HCT116 (cell line): ENCODE measurements at regions of chr15 and their contacts with region 1.

Region 1: GRCh38 chr15:62209322-62209721 is 44.2 kb upstream of the C2CD4B start:
- DNase-seq: no peak
- ATAC-seq: no peak
- H3K4me3 ChIP-seq: no peak overlapping the region
- H3K27ac ChIP-seq: no peak overlapping the region
- H3K4me1 ChIP-seq: no peaks in the 10 kb centered on the region
- H3K27me3 ChIP-seq: no peaks in the 10 kb centered on the region; the same call in 1 of the 2 replicates
- CTCF ChIP-seq: no peak
- POLR2A ChIP-seq: no peak
- RAD21 ChIP-seq: no peak

Region 2: GRCh38 chr15:61489571-61489970 is 719.8 kb before region 1 on chr15:
- CTCF ChIA-PET with region 1: no interaction called
- POLR2A ChIA-PET with region 1: no interaction called
- RAD21 ChIA-PET with region 1: no interaction called
- intact Hi-C with region 1: no loop called
- DNase-seq: no peak
- ATAC-seq: no peak
- H3K4me3 ChIP-seq: no peak overlapping the region
- H3K27ac ChIP-seq: no peak overlapping the region
- H3K4me1 ChIP-seq: no peaks in the 10 kb centered on the region
- H3K27me3 ChIP-seq: no peaks in the 10 kb centered on the region
- CTCF ChIP-seq: no peak
- POLR2A ChIP-seq: no peak
- RAD21 ChIP-seq: no peak

Region 3: DNA sequence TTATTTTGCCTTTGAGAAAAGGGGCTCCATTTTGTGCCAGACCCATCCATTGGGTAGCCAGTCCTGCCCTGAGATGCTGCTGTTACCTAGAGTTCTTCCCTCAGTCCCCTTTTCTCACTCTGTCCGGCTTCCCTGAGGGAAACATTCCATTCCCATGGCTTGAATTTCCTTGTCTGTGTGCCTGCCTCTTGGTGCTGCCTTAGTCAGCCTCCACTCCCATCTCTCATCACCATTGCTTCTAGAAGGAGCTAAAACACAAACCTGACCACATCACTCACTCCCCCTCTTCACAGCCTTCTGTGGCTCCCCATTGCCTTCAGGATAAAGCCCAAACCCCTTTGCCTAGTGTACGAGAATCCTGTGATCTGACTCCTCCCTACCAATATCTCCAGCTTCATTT is 19.0 kb before region 1 on chr15:
- CTCF ChIA-PET with region 1: no interaction called
- POLR2A ChIA-PET with region 1: no interaction called
- RAD21 ChIA-PET with region 1: no interaction called
- intact Hi-C with region 1: loop called (anchors 1 kb)
- DNase-seq: no peak
- ATAC-seq: no peak
- H3K4me3 ChIP-seq: no peak overlapping the region
- H3K27ac ChIP-seq: no peak overlapping the region
- H3K4me1 ChIP-seq: no peaks in the 10 kb centered on the region
- H3K27me3 ChIP-seq: peaks cover 28% of the 10 kb centered on the region
- CTCF ChIP-seq: no peak
- POLR2A ChIP-seq: no peak
- RAD21 ChIP-seq: no peak